CD8-positive, alpha-beta T cell (primary cell): ENCODE measurements at regions of chr10 and their contacts with region 1.

Region 1: GRCh38 chr10:96339957-96340904 is 18.6 kb downstream of the OPALIN start:
- DNase-seq: peak; percentile 8 to 73 (median 50)
- ATAC-seq: peak; percentile 72
- H3K4me3 ChIP-seq: no peak overlapping the region
- H3K4me3 Mint-ChIP-seq: no peak overlapping the region
- H3K27ac ChIP-seq: no peak overlapping the region
- H3K27ac Mint-ChIP-seq: no peak overlapping the region
- H3K4me1 ChIP-seq: no peaks in the 10 kb centered on the region
- H3K4me1 Mint-ChIP-seq: no peaks in the 10 kb centered on the region
- H3K27me3 ChIP-seq: no peaks in the 10 kb centered on the region
- H3K27me3 Mint-ChIP-seq: no peaks in the 10 kb centered on the region
- CTCF ChIP-seq: peak; percentile 69

Region 2: DNA sequence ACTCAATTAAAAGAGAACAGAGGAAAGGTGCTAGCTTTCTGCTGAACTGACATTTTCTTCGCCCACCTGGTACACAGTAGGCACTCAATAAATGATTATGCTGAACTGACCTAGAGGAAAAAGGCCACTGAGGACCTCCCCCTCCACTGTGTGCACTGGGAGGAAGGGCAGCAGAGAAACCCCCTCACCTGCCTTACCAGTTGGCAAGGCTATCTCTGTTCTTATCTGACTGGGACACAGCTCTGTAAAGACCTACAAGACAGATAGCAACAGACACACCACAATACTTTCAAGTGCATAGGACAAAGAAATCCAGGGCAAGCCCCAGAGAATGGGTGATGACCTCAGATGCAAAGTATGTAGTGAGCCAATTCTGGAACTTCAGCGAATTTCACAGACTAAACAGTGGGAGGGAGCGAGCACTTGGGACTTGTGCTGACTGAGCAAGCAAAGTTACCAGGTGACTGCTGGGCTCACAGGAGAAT is 1079.8 kb before region 1 on chr10:
- CTCF ChIA-PET with region 1: no interaction called
- POLR2A ChIA-PET with region 1: no interaction called
- intact Hi-C with region 1: no loop called
- DNase-seq: no peak
- ATAC-seq: no peak
- H3K4me3 ChIP-seq: no peak overlapping the region
- H3K4me3 Mint-ChIP-seq: no peak overlapping the region
- H3K27ac ChIP-seq: no peak overlapping the region
- H3K27ac Mint-ChIP-seq: no peak overlapping the region
- H3K4me1 ChIP-seq: no peaks in the 10 kb centered on the region
- H3K4me1 Mint-ChIP-seq: no peaks in the 10 kb centered on the region
- H3K27me3 ChIP-seq: no peaks in the 10 kb centered on the region
- H3K27me3 Mint-ChIP-seq: peaks cover 3% of the 10 kb centered on the region
- CTCF ChIP-seq: no peak

Region 3: DNA sequence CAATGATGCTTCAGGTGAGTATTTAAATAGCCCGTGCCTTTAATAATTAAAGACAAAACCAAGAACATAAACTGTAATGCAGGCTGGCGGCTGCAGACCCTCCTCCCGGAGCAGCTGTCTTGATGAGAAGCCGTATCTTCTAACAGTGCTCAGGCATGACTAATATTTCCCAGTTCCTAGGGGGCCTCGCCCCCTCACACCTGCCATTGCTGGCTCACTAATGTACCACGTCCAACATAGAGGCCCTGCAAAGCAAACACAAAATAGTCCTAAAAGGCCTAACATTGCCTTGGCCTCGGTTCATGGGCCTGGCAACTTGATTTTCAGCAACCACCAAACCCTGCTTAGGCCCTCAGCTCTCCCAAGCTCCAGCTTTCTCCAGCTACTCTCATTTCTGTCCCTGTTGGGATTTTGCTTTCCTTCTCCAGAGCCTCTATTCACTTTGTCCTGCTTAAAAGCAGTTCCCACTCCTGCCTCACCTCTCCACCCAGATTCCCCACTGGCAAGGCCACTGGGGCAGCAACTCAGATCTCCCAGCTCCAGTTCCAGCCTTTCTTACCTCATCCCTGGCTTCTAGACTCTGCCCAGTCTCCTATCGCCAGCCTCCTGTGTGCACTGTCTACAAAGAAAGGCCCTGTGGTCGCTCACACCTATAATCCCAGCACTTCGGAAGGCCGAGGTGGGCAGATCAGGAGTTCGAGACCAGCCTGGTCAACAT is 795.3 kb before region 1 on chr10:
- CTCF ChIA-PET with region 1: no interaction called
- POLR2A ChIA-PET with region 1: no interaction called
- intact Hi-C with region 1: no loop called
- DNase-seq: no peak
- ATAC-seq: no peak
- H3K4me3 ChIP-seq: no peak overlapping the region
- H3K4me3 Mint-ChIP-seq: no peak overlapping the region
- H3K27ac ChIP-seq: no peak overlapping the region
- H3K27ac Mint-ChIP-seq: no peak overlapping the region
- H3K4me1 ChIP-seq: no peaks in the 10 kb centered on the region
- H3K4me1 Mint-ChIP-seq: no peaks in the 10 kb centered on the region
- H3K27me3 ChIP-seq: no peaks in the 10 kb centered on the region
- H3K27me3 Mint-ChIP-seq: peaks cover 5% of the 10 kb centered on the region
- CTCF ChIP-seq: no peak

Region 4: DNA sequence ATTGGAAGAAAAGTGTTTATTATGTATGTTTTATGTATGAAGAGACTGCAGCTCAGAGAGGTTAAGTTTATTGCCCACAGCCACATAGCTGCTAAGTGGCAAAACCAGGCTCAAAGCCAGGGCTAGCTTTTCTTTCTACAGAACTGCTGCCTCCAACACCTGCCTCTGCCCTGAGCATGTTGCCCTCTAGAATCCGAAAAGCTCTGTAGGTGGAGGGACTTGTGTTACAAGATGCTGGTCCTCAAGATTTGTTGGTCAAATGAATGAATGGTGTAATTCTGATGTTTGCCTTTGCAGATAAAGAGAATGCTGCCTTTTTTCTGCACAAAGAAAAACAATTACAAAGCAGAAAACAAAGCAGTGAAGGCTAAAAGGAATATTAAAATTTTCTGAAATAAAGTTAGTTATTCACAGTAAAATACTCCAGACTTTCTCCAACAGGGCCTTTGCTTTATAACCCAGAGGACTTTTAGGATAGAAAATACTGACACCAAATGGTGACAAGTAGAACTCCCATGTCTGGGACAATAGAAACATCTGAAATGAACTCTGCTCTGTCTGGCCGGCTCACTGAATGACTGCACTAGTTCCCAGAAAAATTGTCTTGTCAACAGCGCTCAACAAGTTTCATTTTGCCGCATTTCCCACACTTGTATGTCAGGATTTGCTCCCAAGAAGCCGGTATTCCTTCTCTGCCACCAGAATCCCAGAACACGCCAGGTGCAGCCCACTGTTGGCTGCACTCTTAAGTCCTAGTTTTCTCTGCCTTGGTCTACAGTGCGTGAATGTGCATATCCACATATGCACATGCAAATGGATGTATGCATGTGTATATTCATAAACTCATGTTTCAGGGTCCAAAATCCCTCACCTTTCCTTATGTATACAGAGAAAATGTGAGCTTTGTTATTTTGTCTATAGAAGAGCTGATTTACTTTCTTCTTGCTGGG is 47.0 kb before region 1 on chr10:
- CTCF ChIA-PET with region 1: interaction called, 24 read pairs
- POLR2A ChIA-PET with region 1: no interaction called
- intact Hi-C with region 1: loop called in 1 of 2 experiments (anchors 2 kb)
- DNase-seq: peak in 4 of 9 experiments; percentile 10 to 51 (median 39)
- ATAC-seq: peak; percentile 54
- H3K4me3 ChIP-seq: no peak overlapping the region
- H3K4me3 Mint-ChIP-seq: no peak overlapping the region
- H3K27ac ChIP-seq: no peak overlapping the region
- H3K27ac Mint-ChIP-seq: no peak overlapping the region
- H3K4me1 ChIP-seq: peaks cover 27% of the 10 kb centered on the region
- H3K4me1 Mint-ChIP-seq: peaks cover 28% of the 10 kb centered on the region
- H3K27me3 ChIP-seq: no peaks in the 10 kb centered on the region
- H3K27me3 Mint-ChIP-seq: peaks cover 5% of the 10 kb centered on the region
- CTCF ChIP-seq: peak; percentile 63

Region 5: GRCh38 chr10:96299383-96299782 is 40.8 kb before region 1 on chr10:
- CTCF ChIA-PET with region 1: interaction called, 24 read pairs
- POLR2A ChIA-PET with region 1: no interaction called
- intact Hi-C with region 1: loop called in 1 of 2 experiments (anchors 2 kb)
- DNase-seq: peak in 8 of 9 experiments; percentile 7 to 70 (median 31)
- ATAC-seq: peak; percentile 77
- H3K4me3 ChIP-seq: peak overlapping the region in 1 of 2 experiments; percentile 10
- H3K4me3 Mint-ChIP-seq: peak overlapping the region; percentile 38
- H3K27ac ChIP-seq: peak overlapping the region; percentile 11 to 38
- H3K27ac Mint-ChIP-seq: peak overlapping the region; percentile 90
- H3K4me1 ChIP-seq: peaks cover 56% of the 10 kb centered on the region
- H3K4me1 Mint-ChIP-seq: peaks cover 59% of the 10 kb centered on the region
- H3K27me3 ChIP-seq: no peaks in the 10 kb centered on the region
- H3K27me3 Mint-ChIP-seq: peaks cover 7% of the 10 kb centered on the region
- CTCF ChIP-seq: no peak